ENCODE measurements at regions of chr19 and their contacts with region 1.

Region 1: GRCh38 chr19:44689056-44689895 is 9.7 kb upstream of the CEACAM16 start:
- DNase-seq: peak; percentile 65
- H3K4me3 Mint-ChIP-seq: no peak overlapping the region
- H3K27ac Mint-ChIP-seq: peak overlapping the region; percentile 6
- H3K4me1 Mint-ChIP-seq: peaks cover 56% of the 10 kb centered on the region
- H3K27me3 Mint-ChIP-seq: peaks cover 11% of the 10 kb centered on the region

Region 2: GRCh38 chr19:43229315-43229714 is 1460.0 kb before region 1 on chr19:
- intact Hi-C with region 1: no loop called
- DNase-seq: no peak
- H3K4me3 Mint-ChIP-seq: no peak overlapping the region
- H3K27ac Mint-ChIP-seq: no peak overlapping the region
- H3K4me1 Mint-ChIP-seq: no peaks in the 10 kb centered on the region
- H3K27me3 Mint-ChIP-seq: no peaks in the 10 kb centered on the region

Region 3: DNA sequence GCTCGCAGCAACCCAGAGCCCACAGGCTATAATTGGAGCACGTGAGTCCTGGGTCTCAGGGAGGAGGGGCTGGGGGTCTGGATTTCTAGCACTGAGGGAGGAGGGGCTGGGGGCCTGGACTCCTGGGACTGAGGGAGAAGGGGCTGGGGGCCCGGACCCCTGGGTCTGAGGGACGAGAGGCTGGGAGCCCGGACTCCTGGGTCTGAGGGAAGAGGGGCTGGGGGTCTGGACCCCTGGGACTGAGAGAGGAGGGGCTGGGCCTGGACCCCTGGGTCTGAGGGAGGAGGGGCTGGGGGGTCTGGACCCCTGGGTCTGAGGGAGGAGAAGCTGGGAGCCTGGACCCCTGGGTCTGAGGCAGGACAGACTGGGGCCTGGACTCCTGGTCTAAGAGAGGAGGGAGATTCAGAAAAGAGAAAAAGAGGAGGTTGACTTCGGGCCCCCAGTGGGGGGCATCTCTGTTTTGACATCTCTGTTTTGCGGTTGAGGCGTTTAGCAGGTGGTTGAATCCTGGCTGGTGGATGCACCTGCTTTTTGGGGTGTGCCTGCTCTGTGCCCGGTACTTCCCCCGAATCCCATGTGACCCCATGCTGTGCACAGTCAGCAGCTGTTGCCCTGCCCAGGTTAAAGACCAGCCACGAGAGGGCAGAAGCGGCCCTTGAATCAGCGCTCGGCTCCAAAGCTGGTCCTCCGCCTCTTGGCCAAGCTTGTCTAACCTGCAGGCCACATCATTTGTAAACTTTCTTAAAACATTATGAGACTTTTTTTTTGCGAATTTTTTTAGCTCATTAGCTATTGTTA is 35.1 kb before region 1 on chr19:
- intact Hi-C with region 1: loop called (anchors 1 kb)
- DNase-seq: peak; percentile 66
- H3K4me3 Mint-ChIP-seq: no peak overlapping the region
- H3K27ac Mint-ChIP-seq: no peak overlapping the region
- H3K4me1 Mint-ChIP-seq: peaks cover 13% of the 10 kb centered on the region
- H3K27me3 Mint-ChIP-seq: no peaks in the 10 kb centered on the region

Region 4: GRCh38 chr19:44723952-44724319 is 34.7 kb after region 1 on chr19:
- intact Hi-C with region 1: loop called (anchors 1 kb)
- DNase-seq: peak; percentile 77
- H3K4me3 Mint-ChIP-seq: peak overlapping the region; percentile 67
- H3K27ac Mint-ChIP-seq: peak overlapping the region; percentile 25
- H3K4me1 Mint-ChIP-seq: peaks cover 58% of the 10 kb centered on the region
- H3K27me3 Mint-ChIP-seq: no peaks in the 10 kb centered on the region

Region 5: DNA sequence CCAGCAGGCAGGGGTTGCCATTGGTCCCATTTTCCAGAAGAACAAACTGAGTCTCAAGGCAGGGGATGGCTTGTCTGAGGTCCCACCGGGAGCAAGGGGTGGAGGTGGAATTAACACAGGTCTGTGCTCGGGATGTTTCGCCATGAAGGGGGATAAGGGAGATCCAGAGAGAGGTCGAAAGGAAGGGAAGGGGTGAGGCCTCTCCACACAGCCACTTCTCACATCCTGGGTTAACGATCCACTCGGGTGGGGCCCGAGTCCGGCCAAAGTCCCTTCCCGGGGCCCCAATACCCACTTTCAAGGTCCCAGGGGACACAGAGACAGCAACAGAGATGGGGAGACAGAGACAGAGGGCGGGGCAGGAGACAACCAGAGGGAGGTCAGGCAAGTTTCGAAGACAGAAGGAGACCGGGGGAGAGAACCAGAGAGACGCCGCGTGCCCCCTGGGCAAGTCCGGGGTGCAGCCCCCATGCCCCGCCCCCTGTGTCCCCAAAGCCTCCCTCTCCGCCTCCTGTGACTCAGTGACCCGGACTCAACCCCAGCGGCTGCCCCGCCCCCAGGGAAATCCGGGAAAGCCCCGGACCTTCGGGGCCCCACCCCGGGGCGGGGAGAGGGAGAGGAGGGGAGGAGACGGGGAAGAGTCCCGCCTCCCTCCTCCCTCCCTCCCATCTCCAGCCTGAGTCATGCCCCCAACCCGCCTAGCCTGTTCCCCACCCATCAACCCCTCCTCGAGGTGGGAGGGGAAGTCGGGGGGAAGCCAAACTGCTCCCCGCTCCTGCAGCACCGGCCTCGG is 57.9 kb after region 1 on chr19:
- intact Hi-C with region 1: loop called (anchors 1 kb)
- DNase-seq: peak; percentile 87
- H3K4me3 Mint-ChIP-seq: peak overlapping the region; percentile 93
- H3K27ac Mint-ChIP-seq: peak overlapping the region; percentile 97
- H3K4me1 Mint-ChIP-seq: peaks cover 48% of the 10 kb centered on the region
- H3K27me3 Mint-ChIP-seq: no peaks in the 10 kb centered on the region

Region 6: DNA sequence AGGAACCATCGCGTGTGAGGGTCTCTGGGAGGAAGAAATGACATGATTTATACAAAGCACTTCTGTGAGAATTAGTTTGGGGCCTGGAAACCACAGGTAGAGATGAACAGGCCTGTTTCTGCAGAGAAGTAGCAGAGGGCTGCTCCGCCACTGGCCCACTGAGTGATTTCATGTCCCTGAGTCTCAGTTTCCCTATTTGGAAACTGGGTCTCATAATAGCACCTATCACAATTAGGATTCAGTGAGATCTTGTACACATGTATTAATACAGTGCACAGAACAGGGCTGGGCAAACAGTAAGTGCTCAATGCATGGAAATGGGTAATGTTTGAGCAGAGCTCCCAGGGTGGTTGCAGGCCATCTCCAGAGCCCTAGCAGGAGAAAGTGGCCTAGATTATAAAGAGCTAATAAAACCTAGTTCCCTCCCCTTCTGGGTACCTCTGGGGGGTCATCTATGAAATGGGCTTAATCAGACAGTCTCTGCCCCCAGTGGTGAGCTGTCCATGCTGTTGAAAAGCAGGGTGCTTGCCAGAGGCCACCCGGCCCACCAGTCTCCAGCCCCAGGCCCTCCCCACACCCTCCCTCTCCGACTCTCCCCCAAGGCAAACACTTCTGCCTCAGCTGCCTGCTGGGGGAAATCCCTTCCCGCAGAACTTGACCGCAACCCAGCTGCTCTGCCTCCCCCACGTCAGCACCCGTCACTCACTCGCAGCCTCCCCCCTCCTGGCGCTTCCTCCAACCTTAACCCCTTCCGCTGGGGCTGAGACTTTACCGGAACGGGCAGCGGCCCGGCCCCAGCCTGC is 63.7 kb after region 1 on chr19:
- intact Hi-C with region 1: loop called (anchors 1 kb)
- DNase-seq: peak; percentile 95
- H3K4me3 Mint-ChIP-seq: peak overlapping the region; percentile 88
- H3K27ac Mint-ChIP-seq: peak overlapping the region; percentile 90
- H3K4me1 Mint-ChIP-seq: peaks cover 60% of the 10 kb centered on the region
- H3K27me3 Mint-ChIP-seq: no peaks in the 10 kb centered on the region

Region 7: GRCh38 chr19:44890366-44891015 is 201.2 kb after region 1 on chr19:
- intact Hi-C with region 1: loop called (anchors 1 kb)
- DNase-seq: peak; percentile 100
- H3K4me3 Mint-ChIP-seq: peak overlapping the region; percentile 86
- H3K27ac Mint-ChIP-seq: peak overlapping the region; percentile 96
- H3K4me1 Mint-ChIP-seq: peaks cover 30% of the 10 kb centered on the region
- H3K27me3 Mint-ChIP-seq: no peaks in the 10 kb centered on the region